Dendritic cell treated with granulocyte-macrophage colony-stimulating factor and Interleukin-4, amounts not matched to agents 40 ng/mL and 50 ng/mL, for 4 days (primary cell): ENCODE measurements at regions of chr4 and their contacts with region 1.

Region 1: DNA sequence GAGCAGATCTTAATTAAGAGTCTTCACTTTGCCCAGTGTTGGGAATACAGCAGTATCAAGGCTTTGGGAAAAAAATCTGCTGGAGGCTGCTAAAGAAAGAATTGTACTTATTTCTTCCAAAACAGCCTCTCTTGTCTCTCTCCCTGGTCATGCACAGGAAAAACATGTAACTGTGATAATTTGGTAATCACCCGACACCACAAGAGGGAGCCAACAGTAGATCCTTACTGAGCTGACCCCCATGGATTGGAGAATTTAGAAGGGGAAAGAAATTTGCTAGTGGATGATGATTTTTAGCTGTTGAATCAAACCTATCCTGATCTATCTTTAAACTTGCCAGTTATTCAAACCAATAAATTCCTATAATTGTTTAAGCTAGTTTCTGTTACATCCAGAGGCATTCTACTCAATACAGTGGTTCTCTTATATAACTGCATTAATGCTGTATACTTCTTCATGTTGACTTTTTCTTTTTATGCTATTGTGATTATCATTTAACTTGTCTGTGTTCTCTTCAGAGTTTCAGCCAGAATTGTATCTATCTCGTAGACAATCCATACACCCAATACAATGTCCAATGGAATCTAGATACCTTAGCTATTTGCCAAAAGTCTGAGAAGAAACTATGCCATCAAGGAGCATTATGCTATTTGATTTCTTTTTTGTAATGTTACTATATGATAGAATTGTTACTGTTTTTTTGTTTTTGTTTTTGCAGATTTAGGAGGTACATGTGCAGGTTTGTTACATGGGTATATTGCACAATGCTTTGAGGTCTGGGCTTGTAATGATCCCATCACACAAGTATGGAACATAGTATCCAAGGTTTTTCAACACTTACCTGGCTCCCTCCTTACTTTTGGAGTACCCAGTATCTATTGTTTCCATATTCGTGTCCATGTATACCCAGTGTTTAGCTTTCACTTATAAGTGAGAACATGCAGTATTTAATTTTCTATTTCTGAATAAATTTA is 31.3 kb upstream of the ARHGEF38 start:
- H3K4me3 Mint-ChIP-seq: no peak overlapping the region
- H3K27ac Mint-ChIP-seq: no peak overlapping the region
- H3K4me1 Mint-ChIP-seq: no peaks in the 10 kb centered on the region
- H3K27me3 Mint-ChIP-seq: no peaks in the 10 kb centered on the region

Region 2: GRCh38 chr4:105715692-105716278 is 194.7 kb after region 1 on chr4:
- intact Hi-C with region 1: loop called (anchors 1 kb)
- H3K4me3 Mint-ChIP-seq: no peak overlapping the region
- H3K27ac Mint-ChIP-seq: no peak overlapping the region
- H3K4me1 Mint-ChIP-seq: no peaks in the 10 kb centered on the region
- H3K27me3 Mint-ChIP-seq: no peaks in the 10 kb centered on the region